GM12878 (cell line): ENCODE measurements at regions of chr20 and their contacts with region 1.

Region 1: DNA sequence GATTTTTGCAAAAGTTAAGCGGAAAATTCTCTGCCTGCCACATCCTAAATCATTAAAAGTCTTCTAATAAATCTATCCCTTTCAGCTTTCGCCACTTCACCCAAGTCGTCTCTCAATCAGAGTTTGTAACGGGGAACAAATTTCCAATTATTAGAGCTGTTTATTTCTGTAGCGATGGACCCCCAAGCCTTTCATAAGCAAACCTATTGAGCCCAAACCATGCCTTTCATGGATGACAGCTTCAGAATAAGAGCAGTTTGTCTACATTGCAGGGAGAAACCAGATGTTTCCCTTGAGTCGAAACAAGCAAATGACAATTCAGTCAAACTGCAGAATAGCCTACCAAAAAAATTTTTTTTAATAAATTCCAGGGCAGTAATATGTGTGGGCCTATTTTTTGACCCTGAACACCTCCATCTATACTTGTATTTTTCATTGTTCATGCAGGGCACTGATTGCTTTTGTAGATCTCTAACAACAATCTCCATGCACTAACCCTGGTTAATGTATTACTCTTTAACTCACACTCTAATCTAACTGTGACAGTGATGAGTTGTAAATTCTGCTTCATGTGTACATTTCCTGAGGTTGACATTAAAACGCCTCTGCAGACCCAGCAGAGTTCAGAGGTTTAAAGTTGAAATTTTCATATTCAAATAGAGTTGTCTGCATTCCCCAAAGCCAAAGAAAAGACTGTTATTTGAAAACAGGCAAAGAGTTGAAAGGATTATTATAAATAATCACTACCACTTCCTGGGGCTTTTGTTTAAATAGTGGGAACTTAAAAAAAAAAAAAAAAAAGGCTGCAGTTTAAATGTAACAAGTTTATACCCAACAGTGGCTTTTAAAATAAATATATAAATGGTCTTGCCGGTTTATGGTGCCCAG is 64.5 kb downstream of the ATP9A start:
- DNase-seq: no peak
- ATAC-seq: peak; percentile 41
- H3K4me3 ChIP-seq: no peak overlapping the region
- H3K27ac ChIP-seq: no peak overlapping the region
- H3K4me1 ChIP-seq: no peaks in the 10 kb centered on the region
- H3K27me3 ChIP-seq: peaks cover 0 to 3% of the 10 kb centered on the region in 2 experiments; a peak in 1 of 4 replicates
- CTCF ChIP-seq: no peak
- EP300 ChIP-seq: no peak
- POLR2A ChIP-seq: no peak
- RAD21 ChIP-seq: no peak

Region 2: GRCh38 chr20:51616060-51616459 is 87.6 kb before region 1 on chr20:
- CTCF ChIA-PET with region 1: no interaction called
- POLR2A ChIA-PET with region 1: no interaction called
- RAD21 ChIA-PET with region 1: no interaction called
- SMC1A ChIA-PET with region 1: no interaction called
- in situ Hi-C with region 1: no loop called
- intact Hi-C with region 1: no loop called
- DNase-seq: no peak
- ATAC-seq: peak; percentile 70
- H3K4me3 ChIP-seq: no peak overlapping the region
- H3K27ac ChIP-seq: no peak overlapping the region
- H3K4me1 ChIP-seq: peaks cover 9% of the 10 kb centered on the region; the same call in 1 of the 2 replicates
- H3K27me3 ChIP-seq: peaks cover 0 to 2% of the 10 kb centered on the region in 2 experiments; a peak in 2 of 4 replicates
- CTCF ChIP-seq: peak; percentile 22 to 29 (median 26); a peak in 1 of 6 replicates
- EP300 ChIP-seq: no peak
- POLR2A ChIP-seq: no peak
- RAD21 ChIP-seq: 0 out of 2 replicates have a peak, but pooled peaks have one; percentile 14

Region 3: GRCh38 chr20:51680065-51680740 is 23.4 kb before region 1 on chr20:
- CTCF ChIA-PET with region 1: no interaction called
- POLR2A ChIA-PET with region 1: no interaction called
- RAD21 ChIA-PET with region 1: no interaction called
- SMC1A ChIA-PET with region 1: no interaction called
- in situ Hi-C with region 1: no loop called
- intact Hi-C with region 1: no loop called
- DNase-seq: no peak
- ATAC-seq: no peak
- H3K4me3 ChIP-seq: no peak overlapping the region
- H3K27ac ChIP-seq: no peak overlapping the region
- H3K4me1 ChIP-seq: no peaks in the 10 kb centered on the region
- H3K27me3 ChIP-seq: peaks cover 0 to 3% of the 10 kb centered on the region in 2 experiments; a peak in 1 of 4 replicates
- CTCF ChIP-seq: no peak
- EP300 ChIP-seq: no peak
- POLR2A ChIP-seq: no peak
- RAD21 ChIP-seq: no peak

Region 4: GRCh38 chr20:51966291-51966971 is 262.8 kb after region 1 on chr20:
- CTCF ChIA-PET with region 1: no interaction called
- POLR2A ChIA-PET with region 1: no interaction called
- RAD21 ChIA-PET with region 1: no interaction called
- SMC1A ChIA-PET with region 1: no interaction called
- in situ Hi-C with region 1: no loop called
- intact Hi-C with region 1: loop called (anchors 10 kb)
- DNase-seq: no peak
- ATAC-seq: peak; percentile 65
- H3K4me3 ChIP-seq: no peak overlapping the region
- H3K27ac ChIP-seq: no peak overlapping the region
- H3K4me1 ChIP-seq: no peaks in the 10 kb centered on the region
- H3K27me3 ChIP-seq: no peaks in the 10 kb centered on the region
- CTCF ChIP-seq: peak; percentile 44 to 53 (median 46); a peak in 5 of 6 replicates
- EP300 ChIP-seq: no peak
- POLR2A ChIP-seq: no peak
- RAD21 ChIP-seq: peak; percentile 21; the same call in 1 of the 2 replicates